ENCODE measurements at regions of chr5 and their contacts with region 1.

Region 1: GRCh38 chr5:139633295-139634027 is 14.7 kb upstream of the CXXC5 start:
- DNase-seq: peak; percentile 71
- H3K4me3 Mint-ChIP-seq: no peak overlapping the region
- H3K27ac Mint-ChIP-seq: no peak overlapping the region
- H3K4me1 Mint-ChIP-seq: peaks cover 28% of the 10 kb centered on the region
- H3K27me3 Mint-ChIP-seq: no peaks in the 10 kb centered on the region

Region 2: DNA sequence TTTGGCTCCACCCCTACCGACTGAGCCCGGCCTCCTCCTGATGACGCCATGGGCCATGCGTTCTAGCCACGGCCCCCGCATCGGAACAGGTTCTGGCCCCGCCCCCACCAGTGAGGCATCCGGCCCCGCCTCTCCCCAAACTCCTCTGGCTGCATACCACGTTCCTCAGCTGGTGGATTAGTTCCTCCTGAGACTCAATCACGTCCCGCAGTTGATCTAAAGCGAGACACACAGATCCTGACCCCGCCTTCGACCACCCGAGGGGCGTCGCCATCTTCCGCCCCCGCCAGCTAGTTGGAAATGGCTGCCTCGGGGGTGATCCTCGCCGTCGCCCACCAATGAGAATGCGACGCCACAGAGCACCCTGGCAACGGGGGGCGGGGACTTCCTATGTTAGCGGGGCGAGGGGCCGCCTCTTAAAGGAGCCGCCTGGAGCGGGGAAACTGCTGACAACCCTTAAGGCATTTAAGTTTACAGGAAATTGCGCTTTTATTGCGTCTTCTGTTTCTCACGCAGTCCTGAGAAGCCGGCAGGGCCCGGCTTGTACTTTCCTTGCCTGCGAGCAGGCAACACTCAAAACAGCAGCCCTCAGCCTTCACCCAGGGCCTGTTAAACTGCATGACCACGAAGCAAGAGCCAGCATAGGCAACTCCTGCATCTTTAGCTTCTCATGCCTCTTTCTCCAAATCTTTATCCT is 229.5 kb before region 1 on chr5 and contains the start of gene SPATA24:
- CTCF ChIA-PET with region 1: no interaction called
- intact Hi-C with region 1: loop called (anchors 5 kb)
- DNase-seq: peak; percentile 99
- H3K4me3 Mint-ChIP-seq: peak within 1 kb of the TSS; percentile 93
- H3K27ac Mint-ChIP-seq: peak within 1 kb of the TSS; percentile 100
- H3K4me1 Mint-ChIP-seq: peaks cover 37% of the 10 kb centered on the region
- H3K27me3 Mint-ChIP-seq: no peaks in the 10 kb centered on the region
- total RNA-seq, gene SPATA24: 6.0 to 7.4 TPM

Region 3: DNA sequence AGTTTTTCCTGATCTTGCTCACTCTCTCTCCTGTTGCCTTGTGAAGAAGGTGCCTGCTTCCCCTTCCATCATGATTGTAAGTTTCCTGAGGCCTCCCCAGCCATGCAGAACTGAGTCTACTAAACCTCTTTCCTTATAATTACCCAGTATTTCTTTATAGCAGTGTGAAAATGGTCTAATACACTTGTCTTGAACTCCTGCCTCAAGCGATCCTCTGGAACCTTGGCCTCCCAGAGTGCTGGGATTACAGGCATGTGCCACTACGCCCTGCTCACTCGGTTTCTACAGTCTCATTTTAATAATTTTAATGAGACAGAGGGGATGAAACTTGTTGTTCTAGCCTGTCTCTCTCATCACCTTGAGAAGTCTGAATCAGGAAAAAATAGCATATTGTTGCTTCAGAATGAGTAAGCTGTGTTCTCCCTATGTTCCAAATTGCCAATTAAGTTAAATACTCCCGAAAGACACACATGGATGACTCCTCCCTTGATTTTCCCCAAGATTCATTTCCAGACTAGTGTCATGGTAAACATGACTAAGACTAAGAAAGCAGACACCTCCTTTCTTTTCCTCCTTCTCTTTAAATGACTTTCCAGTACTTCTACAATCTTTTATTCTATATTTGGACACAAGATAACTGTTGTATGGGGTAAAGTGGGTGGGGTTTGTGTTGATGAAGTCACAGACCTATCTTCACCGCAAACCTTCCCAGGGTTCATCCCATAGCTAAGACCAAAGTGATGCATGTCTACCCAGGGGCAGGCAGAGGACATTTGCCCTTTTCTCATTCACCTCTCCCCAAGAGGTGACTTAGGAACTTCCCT is 186.3 kb before region 1 on chr5:
- CTCF ChIA-PET with region 1: no interaction called
- intact Hi-C with region 1: loop called (anchors 1 kb)
- DNase-seq: peak; percentile 68
- H3K4me3 Mint-ChIP-seq: no peak overlapping the region
- H3K27ac Mint-ChIP-seq: peak overlapping the region; percentile 97
- H3K4me1 Mint-ChIP-seq: peaks cover 63% of the 10 kb centered on the region
- H3K27me3 Mint-ChIP-seq: no peaks in the 10 kb centered on the region

Region 4: DNA sequence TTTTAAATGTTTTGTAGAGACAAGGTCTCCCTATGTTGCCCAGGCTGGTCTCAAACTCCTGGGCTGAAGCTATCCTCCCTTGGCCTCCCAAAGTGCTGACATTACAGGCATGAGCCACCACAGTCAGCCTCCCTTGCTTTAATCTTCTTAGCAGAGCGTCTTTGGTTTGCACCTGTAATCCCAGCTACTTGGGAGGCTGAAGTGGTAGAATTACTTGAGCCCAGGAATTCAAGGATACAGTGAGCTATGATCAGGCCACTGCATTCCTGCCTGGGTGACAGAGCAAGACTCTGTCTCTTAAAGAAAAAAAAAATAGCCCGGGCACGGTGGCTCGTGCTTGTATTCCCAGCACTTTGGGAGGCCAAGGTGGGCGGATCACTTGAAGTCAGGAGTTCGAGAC is 44.5 kb before region 1 on chr5:
- CTCF ChIA-PET with region 1: interaction called, 4 read pairs
- intact Hi-C with region 1: loop called (anchors 2 kb)
- DNase-seq: no peak
- H3K4me3 Mint-ChIP-seq: no peak overlapping the region
- H3K27ac Mint-ChIP-seq: no peak overlapping the region
- H3K4me1 Mint-ChIP-seq: peaks cover 67% of the 10 kb centered on the region
- H3K27me3 Mint-ChIP-seq: no peaks in the 10 kb centered on the region

Region 5: DNA sequence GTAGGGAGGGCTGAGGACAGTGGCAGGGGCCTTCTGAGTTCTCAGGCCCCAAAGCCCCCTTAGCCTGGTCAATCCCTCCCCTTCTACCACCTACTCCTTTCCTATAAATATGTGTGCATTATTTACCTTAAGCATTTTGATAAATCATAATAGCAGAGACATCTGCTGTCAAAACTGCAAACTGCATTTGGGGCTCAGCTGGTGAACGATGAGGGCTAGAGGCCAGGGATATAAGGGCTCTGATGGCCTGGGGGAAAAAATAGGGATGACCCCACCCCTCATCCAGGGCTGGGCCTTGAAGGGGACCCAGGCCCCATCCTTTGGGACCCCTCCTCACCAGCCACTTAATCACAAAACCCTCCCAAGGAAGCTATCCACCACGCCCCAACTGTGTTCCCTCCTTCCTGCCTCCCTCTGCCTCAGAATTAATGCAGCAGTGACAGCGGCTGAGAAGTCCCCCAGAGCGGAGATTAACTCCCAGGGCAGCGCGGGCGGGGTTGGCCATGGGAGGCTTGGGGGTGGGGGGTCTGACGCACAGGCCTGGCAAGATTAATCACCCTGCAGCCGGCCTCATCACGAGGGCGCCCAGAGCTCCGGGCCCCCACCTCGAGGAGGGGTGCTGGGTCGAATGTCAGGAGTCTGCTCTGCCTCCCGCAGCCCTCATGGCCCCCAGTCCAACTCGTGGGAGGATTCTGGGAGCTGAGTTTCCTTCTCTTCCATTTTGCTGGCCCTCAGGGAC is 56.8 kb after region 1 on chr5:
- CTCF ChIA-PET with region 1: interaction called, 63 read pairs
- intact Hi-C with region 1: loop called (anchors 1 kb)
- DNase-seq: peak; percentile 41
- H3K4me3 Mint-ChIP-seq: no peak overlapping the region
- H3K27ac Mint-ChIP-seq: no peak overlapping the region
- H3K4me1 Mint-ChIP-seq: peaks cover 2% of the 10 kb centered on the region
- H3K27me3 Mint-ChIP-seq: no peaks in the 10 kb centered on the region

Region 6: GRCh38 chr5:139765409-139766217 is 132.2 kb after region 1 on chr5:
- CTCF ChIA-PET with region 1: interaction called, 110 read pairs
- intact Hi-C with region 1: loop called (anchors 1 kb)
- DNase-seq: peak; percentile 86
- H3K4me3 Mint-ChIP-seq: peak overlapping the region; percentile 62
- H3K27ac Mint-ChIP-seq: no peak overlapping the region
- H3K4me1 Mint-ChIP-seq: peaks cover 8% of the 10 kb centered on the region
- H3K27me3 Mint-ChIP-seq: peaks cover 24% of the 10 kb centered on the region

Region 7: GRCh38 chr5:140084541-140084940 is 451.1 kb after region 1 on chr5:
- CTCF ChIA-PET with region 1: no interaction called
- intact Hi-C with region 1: no loop called
- DNase-seq: no peak
- H3K4me3 Mint-ChIP-seq: no peak overlapping the region
- H3K27ac Mint-ChIP-seq: no peak overlapping the region
- H3K4me1 Mint-ChIP-seq: no peaks in the 10 kb centered on the region
- H3K27me3 Mint-ChIP-seq: peaks cover 3% of the 10 kb centered on the region

Measured in activated naive CD4-positive, alpha-beta T cell treated with anti-CD3 and anti-CD28 coated beads for 36 hours (primary cell).